Activated CD4-positive, alpha-beta memory T cell treated with anti-CD3 and anti-CD28 coated beads, Interleukin-2, amount 10 ng/mL, durations not matched to agents 7 days and 5 days (primary cell): ENCODE measurements at regions of chr6 and their contacts with region 1.

Region 1: DNA sequence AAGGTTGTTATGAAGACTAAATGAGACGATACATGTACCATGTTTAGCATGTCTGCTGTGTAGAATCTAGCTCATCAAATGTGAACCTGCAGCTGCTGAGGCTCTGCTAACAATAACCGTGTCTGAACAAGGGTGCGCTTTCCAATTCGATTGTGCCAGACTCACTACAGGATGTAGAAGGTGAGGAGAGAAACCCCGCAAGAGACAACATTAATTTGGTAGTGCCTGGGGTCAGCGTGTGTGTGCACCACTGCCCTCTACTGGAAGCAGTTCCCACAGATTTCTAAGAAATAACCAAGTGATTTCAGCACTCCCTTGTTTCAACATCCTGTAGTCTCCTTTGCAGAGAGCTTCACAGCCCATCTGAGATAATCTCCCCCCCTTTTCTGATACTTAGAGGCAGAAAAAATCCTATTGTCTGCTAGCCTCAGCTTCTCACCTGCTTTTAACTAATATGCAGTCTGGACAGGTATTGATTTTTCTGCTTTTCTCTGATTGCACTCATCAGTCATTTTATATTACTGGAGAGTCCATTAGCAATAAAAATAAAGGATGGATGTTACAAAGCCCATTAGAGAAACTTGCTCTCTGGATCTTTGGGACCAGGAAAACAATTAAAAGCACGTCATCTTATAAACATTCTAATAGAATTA is 96.7 kb upstream of the BACH2 start:
- DNase-seq: peak; percentile 80
- H3K4me3 Mint-ChIP-seq: no peak overlapping the region
- H3K27ac Mint-ChIP-seq: peak overlapping the region; percentile 60
- H3K4me1 Mint-ChIP-seq: peaks cover 60% of the 10 kb centered on the region
- H3K27me3 Mint-ChIP-seq: peaks cover 8% of the 10 kb centered on the region

Region 2: GRCh38 chr6:90296346-90297114 is 96.8 kb before region 1 on chr6 and contains the start of gene BACH2:
- CTCF ChIA-PET with region 1: interaction called, 17 read pairs
- POLR2A ChIA-PET with region 1: interaction called, 36 read pairs
- DNase-seq: peak; percentile 95
- H3K4me3 Mint-ChIP-seq: peak within 1 kb of the TSS; percentile 87
- H3K27ac Mint-ChIP-seq: peak within 1 kb of the TSS; percentile 82
- H3K4me1 Mint-ChIP-seq: peaks cover 27% of the 10 kb centered on the region
- H3K27me3 Mint-ChIP-seq: peaks cover 44% of the 10 kb centered on the region
- total RNA-seq, gene BACH2: 30.3 to 31.1 TPM

Region 3: DNA sequence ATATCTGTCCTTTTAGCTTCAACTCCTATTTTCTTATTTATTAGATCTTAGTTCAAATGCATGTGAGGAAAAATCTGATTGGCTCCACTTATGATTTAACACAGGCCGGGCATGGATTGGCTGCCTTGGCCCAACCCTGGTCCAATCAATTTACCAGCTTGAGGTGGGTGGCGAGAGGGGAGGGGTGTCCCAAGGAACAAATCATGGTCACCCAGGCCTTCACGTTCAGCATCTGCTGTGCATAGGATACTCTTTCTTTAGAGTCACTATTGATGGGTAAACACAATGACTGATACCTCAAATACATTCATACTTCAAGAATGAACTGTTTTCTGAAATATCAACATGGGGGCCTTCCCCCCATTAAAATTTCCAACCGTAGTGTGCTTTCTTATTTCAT is 81.8 kb before region 1 on chr6:
- CTCF ChIA-PET with region 1: no interaction called
- POLR2A ChIA-PET with region 1: no interaction called
- DNase-seq: no peak
- H3K4me3 Mint-ChIP-seq: no peak overlapping the region
- H3K27ac Mint-ChIP-seq: no peak overlapping the region
- H3K4me1 Mint-ChIP-seq: no peaks in the 10 kb centered on the region
- H3K27me3 Mint-ChIP-seq: peaks cover 28% of the 10 kb centered on the region

Region 4: GRCh38 chr6:90403489-90404381 is 10.4 kb after region 1 on chr6:
- CTCF ChIA-PET with region 1: interaction called, 27 read pairs
- POLR2A ChIA-PET with region 1: interaction called, 11 read pairs
- DNase-seq: no peak
- H3K4me3 Mint-ChIP-seq: peak overlapping the region; percentile 10
- H3K27ac Mint-ChIP-seq: peak overlapping the region; percentile 94
- H3K4me1 Mint-ChIP-seq: peaks cover 86% of the 10 kb centered on the region
- H3K27me3 Mint-ChIP-seq: peaks cover 5% of the 10 kb centered on the region

Region 5: GRCh38 chr6:90425161-90425641 is 31.8 kb after region 1 on chr6:
- CTCF ChIA-PET with region 1: interaction called, 17 read pairs
- POLR2A ChIA-PET with region 1: interaction called, 42 read pairs
- DNase-seq: peak; percentile 33
- H3K4me3 Mint-ChIP-seq: peak overlapping the region; percentile 72
- H3K27ac Mint-ChIP-seq: peak overlapping the region; percentile 91
- H3K4me1 Mint-ChIP-seq: peaks cover 25% of the 10 kb centered on the region
- H3K27me3 Mint-ChIP-seq: no peaks in the 10 kb centered on the region

Region 6: GRCh38 chr6:90466154-90466940 is 73.0 kb after region 1 on chr6:
- CTCF ChIA-PET with region 1: interaction called, 10 read pairs
- POLR2A ChIA-PET with region 1: interaction called, 324 read pairs
- DNase-seq: peak; percentile 53
- H3K4me3 Mint-ChIP-seq: peak overlapping the region; percentile 2
- H3K27ac Mint-ChIP-seq: peak overlapping the region; percentile 82
- H3K4me1 Mint-ChIP-seq: peaks cover 96% of the 10 kb centered on the region
- H3K27me3 Mint-ChIP-seq: peaks cover 10% of the 10 kb centered on the region

Region 7: GRCh38 chr6:90478789-90479602 is 85.6 kb after region 1 on chr6:
- CTCF ChIA-PET with region 1: interaction called, 132 read pairs
- POLR2A ChIA-PET with region 1: interaction called, 324 read pairs
- DNase-seq: peak; percentile 85
- H3K4me3 Mint-ChIP-seq: no peak overlapping the region
- H3K27ac Mint-ChIP-seq: peak overlapping the region; percentile 67
- H3K4me1 Mint-ChIP-seq: peaks cover 54% of the 10 kb centered on the region
- H3K27me3 Mint-ChIP-seq: peaks cover 2% of the 10 kb centered on the region

Region 8: GRCh38 chr6:90637320-90637719 is 244.0 kb after region 1 on chr6:
- CTCF ChIA-PET with region 1: no interaction called
- POLR2A ChIA-PET with region 1: no interaction called
- DNase-seq: no peak
- H3K4me3 Mint-ChIP-seq: no peak overlapping the region
- H3K27ac Mint-ChIP-seq: no peak overlapping the region
- H3K4me1 Mint-ChIP-seq: no peaks in the 10 kb centered on the region
- H3K27me3 Mint-ChIP-seq: peaks cover 25% of the 10 kb centered on the region